ENCODE measurements at regions of chr10 and their contacts with region 1.

Region 1: DNA sequence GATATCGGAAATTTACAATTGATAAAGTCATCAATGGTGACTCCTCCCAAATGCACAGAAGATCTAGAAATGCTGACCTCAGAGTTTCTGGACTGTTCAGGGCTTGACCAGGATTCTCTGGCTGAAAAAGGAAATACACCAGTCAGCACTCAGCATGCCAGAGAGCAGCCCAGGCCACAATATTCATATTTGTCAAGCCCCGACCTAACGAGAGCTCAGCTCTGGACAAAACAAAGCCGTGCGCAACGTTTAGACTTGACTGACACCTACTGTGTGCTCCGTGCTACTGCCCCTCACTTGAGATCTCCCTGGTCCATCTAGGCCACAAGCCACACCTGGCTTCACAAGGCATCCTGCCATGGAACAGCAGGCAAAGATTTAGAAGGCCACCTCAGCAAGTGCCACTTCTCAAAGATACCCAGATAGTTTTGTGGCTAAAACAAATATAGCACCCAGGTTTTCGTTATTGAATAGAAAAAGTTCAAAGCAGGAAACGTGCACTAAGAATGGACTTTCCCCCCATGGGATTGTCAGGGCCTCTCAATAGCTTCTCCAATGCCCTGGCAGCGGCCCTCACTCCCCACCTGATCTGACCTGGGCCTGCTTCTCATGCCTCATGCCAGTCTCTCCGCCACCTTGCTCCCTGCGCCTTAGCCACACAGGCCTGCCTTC is 218.3 kb downstream of the FAM107B start:
- DNase-seq: peak; percentile 53
- ATAC-seq: peak; percentile 25
- H3K4me3 Mint-ChIP-seq: no peak overlapping the region
- H3K27ac Mint-ChIP-seq: peak overlapping the region; percentile 87
- H3K4me1 Mint-ChIP-seq: peaks cover 93% of the 10 kb centered on the region
- H3K27me3 Mint-ChIP-seq: no peaks in the 10 kb centered on the region
- CTCF ChIP-seq: peak; percentile 27

Region 2: GRCh38 chr10:14536241-14537213 is 19.9 kb before region 1 on chr10:
- CTCF ChIA-PET with region 1: interaction called, 57 read pairs
- POLR2A ChIA-PET with region 1: interaction called, 4 read pairs
- intact Hi-C with region 1: no loop called
- DNase-seq: peak; percentile 67
- ATAC-seq: peak; percentile 44
- H3K4me3 Mint-ChIP-seq: no peak overlapping the region
- H3K27ac Mint-ChIP-seq: peak overlapping the region; percentile 39
- H3K4me1 Mint-ChIP-seq: peaks cover 78% of the 10 kb centered on the region
- H3K27me3 Mint-ChIP-seq: no peaks in the 10 kb centered on the region
- CTCF ChIP-seq: peak; percentile 65

Region 3: DNA sequence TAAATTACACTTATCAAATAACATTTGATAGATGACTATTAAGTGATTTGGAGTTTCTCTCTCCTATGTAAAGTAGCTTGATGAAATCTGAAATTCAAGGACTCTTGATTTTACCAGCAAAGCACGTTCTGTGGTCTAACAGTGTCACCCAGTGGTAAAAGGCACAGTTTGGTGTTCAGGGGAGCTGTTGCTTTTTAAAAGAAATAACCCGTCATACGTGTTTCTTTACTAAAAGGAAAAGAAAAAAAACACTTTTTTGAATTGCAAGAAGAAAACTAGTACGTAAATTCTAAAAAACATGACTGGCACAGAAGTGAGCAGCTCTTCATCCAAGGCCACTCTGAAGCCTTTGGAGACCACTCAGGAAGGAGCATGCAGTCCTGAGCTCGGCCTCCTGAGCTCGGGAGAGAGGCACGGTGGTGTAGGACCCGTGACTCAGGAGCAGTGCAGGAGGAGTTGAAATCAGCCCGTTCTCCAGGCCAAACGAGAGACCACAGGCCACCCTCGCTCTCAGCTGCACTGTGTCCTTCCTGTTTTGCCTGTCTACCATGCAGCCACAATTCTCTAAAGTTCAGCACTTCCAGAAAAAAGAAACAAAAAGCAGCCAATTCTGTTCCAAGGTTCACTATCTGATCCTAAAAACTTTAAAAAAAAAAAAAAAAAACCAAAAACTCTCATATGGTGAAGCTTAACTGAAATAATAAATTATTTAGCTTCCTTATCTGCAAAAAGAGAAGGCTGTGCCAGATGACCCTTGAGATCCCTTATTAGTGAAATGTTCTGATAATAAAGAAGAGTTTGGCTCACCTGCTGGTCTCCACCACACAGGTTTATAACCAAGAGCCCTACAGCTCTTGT is 13.1 kb before region 1 on chr10:
- CTCF ChIA-PET with region 1: interaction called, 57 read pairs
- POLR2A ChIA-PET with region 1: interaction called, 4 read pairs
- intact Hi-C with region 1: no loop called
- DNase-seq: peak; percentile 60
- ATAC-seq: peak; percentile 74
- H3K4me3 Mint-ChIP-seq: peak overlapping the region; percentile 58
- H3K27ac Mint-ChIP-seq: peak overlapping the region; percentile 88
- H3K4me1 Mint-ChIP-seq: peaks cover 83% of the 10 kb centered on the region
- H3K27me3 Mint-ChIP-seq: no peaks in the 10 kb centered on the region
- CTCF ChIP-seq: peak; percentile 32

Region 4: DNA sequence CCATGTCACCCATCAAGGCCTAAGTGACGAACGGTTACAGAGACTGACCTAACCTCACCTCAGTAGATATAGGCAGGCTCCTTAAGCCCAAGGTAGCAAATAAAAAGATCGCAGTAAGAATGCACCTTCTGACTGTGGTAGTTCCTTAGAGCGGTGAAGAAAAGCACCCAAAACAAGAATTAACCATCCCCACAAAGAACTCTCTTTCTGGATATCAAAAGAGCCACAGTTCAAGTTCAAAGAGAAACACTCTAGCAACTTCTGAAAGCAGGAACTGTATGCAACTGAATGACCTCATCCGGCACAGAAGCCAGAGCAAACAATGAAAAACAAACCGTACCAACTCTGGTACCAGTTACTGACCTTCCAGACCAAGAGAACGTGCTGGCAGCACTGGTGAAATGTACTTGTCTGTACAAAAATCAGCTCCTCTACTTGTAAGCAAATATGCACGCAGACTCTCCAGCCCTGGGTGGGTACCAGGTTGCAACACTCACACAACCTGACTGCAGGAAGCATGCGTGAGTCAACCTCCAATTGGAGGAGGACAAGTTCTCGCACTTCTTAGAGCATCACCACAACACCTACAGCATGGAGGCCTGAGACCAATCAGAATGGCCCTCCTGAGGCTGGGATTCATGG is 15.6 kb after region 1 on chr10:
- CTCF ChIA-PET with region 1: interaction called, 4 read pairs
- POLR2A ChIA-PET with region 1: interaction called, 24 read pairs
- intact Hi-C with region 1: no loop called
- DNase-seq: peak; percentile 81
- ATAC-seq: peak; percentile 84
- H3K4me3 Mint-ChIP-seq: peak overlapping the region; percentile 76
- H3K27ac Mint-ChIP-seq: peak overlapping the region; percentile 92
- H3K4me1 Mint-ChIP-seq: peaks cover 85% of the 10 kb centered on the region
- H3K27me3 Mint-ChIP-seq: no peaks in the 10 kb centered on the region
- CTCF ChIP-seq: no peak

Region 5: GRCh38 chr10:14588084-14588937 is 31.9 kb after region 1 on chr10:
- CTCF ChIA-PET with region 1: interaction called, 8 read pairs
- POLR2A ChIA-PET with region 1: interaction called, 9 read pairs
- intact Hi-C with region 1: loop called (anchors 5 kb)
- DNase-seq: peak; percentile 78
- ATAC-seq: peak; percentile 57
- H3K4me3 Mint-ChIP-seq: peak overlapping the region; percentile 52
- H3K27ac Mint-ChIP-seq: peak overlapping the region; percentile 97
- H3K4me1 Mint-ChIP-seq: peaks cover 90% of the 10 kb centered on the region
- H3K27me3 Mint-ChIP-seq: no peaks in the 10 kb centered on the region
- CTCF ChIP-seq: no peak

Region 6: DNA sequence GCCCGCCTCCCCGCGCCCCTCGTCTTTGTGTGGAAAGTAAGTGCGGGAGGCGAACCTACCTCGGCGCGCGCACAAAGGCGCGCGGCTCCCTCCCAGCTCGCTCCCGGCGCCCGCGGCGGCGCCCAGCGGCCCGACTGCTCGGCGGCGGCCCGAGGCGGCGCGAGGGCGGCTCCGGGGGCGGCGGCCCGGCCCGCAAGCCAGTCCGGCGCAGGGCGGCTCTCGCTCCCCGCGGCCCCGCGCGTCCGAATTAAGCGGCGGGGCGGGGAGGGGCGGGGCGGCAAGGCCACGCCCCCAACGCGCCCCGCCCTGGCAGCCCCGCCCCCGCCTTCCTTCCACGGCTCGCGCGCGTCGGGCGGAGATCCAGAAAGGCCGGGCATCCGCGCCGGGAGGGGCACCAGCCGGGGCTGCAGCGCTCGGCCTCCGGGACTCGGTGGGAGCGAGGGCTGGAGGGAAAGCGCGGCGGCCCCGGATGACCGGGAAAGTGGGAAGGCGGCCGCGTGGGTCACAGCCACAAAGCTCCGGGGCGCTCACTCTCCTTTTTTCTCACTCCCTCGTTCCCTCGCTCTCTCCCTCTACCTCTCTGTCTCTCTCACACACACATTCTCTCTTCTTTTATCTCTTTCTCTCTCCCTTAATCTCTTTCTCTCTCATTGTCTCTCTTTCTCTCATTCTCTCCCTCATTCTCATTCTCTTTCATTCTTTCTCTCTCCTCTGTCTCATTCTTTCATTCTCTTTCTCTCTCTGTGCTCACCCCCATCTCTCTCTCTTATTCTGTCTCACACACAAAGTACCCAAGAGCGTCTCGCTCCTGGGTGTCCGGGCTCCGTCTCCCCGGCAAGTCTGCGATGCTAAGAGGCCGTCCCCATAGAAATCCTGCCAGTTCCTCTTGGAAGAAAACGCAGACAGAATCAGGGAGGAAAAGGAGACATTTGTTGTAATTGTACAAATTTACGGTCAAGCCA is 48.0 kb after region 1 on chr10:
- CTCF ChIA-PET with region 1: interaction called, 4 read pairs
- POLR2A ChIA-PET with region 1: interaction called, 10 read pairs
- intact Hi-C with region 1: loop called (anchors 5 kb)
- DNase-seq: peak; percentile 73
- ATAC-seq: peak; percentile 57
- H3K4me3 Mint-ChIP-seq: peak overlapping the region; percentile 84
- H3K27ac Mint-ChIP-seq: peak overlapping the region; percentile 93
- H3K4me1 Mint-ChIP-seq: peaks cover 65% of the 10 kb centered on the region
- H3K27me3 Mint-ChIP-seq: no peaks in the 10 kb centered on the region
- CTCF ChIP-seq: no peak

Measured in activated CD8-positive, alpha-beta T cell treated with anti-CD3 and anti-CD28 coated beads for 36 hours (primary cell).